PC-3 (cell line): ENCODE measurements at regions of chr11 and their contacts with region 1.

Region 1: GRCh38 chr11:102119997-102120396 is 9.8 kb downstream of the YAP1 start:
- DNase-seq: peak; percentile 78
- ATAC-seq: peak; percentile 19
- H3K4me3 ChIP-seq: peak overlapping the region; percentile 33
- H3K27ac ChIP-seq: peak overlapping the region; percentile 72
- H3K4me1 ChIP-seq: peaks cover 71% of the 10 kb centered on the region
- H3K27me3 ChIP-seq: no peaks in the 10 kb centered on the region
- CTCF ChIP-seq: no peak

Region 2: DNA sequence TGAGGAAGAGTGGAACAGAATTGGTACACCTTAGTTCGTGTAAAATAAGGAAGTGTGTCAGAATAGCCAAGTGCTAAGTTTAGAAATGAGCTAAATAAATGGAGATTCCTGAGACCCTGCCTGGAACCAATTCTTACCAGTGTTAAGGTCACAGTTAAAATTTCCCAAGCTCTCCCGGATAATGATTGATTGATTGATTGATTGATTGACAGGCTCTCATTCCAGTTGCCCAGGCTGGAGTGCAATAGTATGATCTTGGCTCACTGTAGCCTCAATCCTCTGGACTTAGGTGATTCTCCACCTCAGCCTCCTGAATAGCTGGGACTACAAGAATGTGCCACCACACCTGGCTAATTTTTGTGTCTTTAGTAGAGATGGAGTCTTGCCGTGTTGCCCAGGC is 10.2 kb after region 1 on chr11:
- CTCF ChIA-PET with region 1: no interaction called
- POLR2A ChIA-PET with region 1: interaction called, 5 read pairs
- intact Hi-C with region 1: loop called (anchors 1 kb)
- DNase-seq: no peak
- ATAC-seq: no peak
- H3K4me3 ChIP-seq: no peak overlapping the region
- H3K27ac ChIP-seq: no peak overlapping the region
- H3K4me1 ChIP-seq: peaks cover 9% of the 10 kb centered on the region; the same call in 1 of the 2 replicates
- H3K27me3 ChIP-seq: no peaks in the 10 kb centered on the region
- CTCF ChIP-seq: no peak

Region 3: DNA sequence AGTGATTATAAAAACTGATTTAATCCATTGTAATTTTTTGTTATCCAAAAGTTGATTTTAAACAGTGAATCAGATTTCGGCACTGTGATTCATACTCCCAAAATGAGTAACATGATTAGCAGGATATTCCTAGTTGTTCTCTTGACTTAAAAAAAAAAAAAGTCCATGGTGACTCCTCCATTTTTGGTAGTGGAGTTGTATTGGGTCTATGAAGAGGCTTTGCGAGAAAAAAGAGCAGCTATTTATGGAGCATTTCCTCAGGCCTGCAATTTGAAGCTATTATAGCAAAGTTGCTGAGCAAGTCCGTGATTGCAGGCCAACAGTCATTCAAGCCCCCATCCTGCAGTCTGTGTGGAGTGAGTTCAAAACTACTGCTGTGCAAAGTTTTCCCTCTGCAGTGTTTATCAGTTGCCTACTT is 19.1 kb after region 1 on chr11:
- CTCF ChIA-PET with region 1: no interaction called
- POLR2A ChIA-PET with region 1: interaction called, 11 read pairs
- intact Hi-C with region 1: loop called (anchors 2 kb)
- DNase-seq: peak; percentile 89
- ATAC-seq: peak; percentile 80
- H3K4me3 ChIP-seq: peak overlapping the region; percentile 48
- H3K27ac ChIP-seq: peak overlapping the region; percentile 85
- H3K4me1 ChIP-seq: peaks cover 25% of the 10 kb centered on the region
- H3K27me3 ChIP-seq: no peaks in the 10 kb centered on the region
- CTCF ChIP-seq: no peak

Region 4: GRCh38 chr11:102157219-102157618 is 37.2 kb after region 1 on chr11:
- CTCF ChIA-PET with region 1: no interaction called
- POLR2A ChIA-PET with region 1: no interaction called
- intact Hi-C with region 1: loop called (anchors 5 kb)
- DNase-seq: peak; percentile 83
- ATAC-seq: peak; percentile 85
- H3K4me3 ChIP-seq: no peak overlapping the region
- H3K27ac ChIP-seq: peak overlapping the region; percentile 7
- H3K4me1 ChIP-seq: peaks cover 33% of the 10 kb centered on the region
- H3K27me3 ChIP-seq: no peaks in the 10 kb centered on the region
- CTCF ChIP-seq: no peak

Region 5: DNA sequence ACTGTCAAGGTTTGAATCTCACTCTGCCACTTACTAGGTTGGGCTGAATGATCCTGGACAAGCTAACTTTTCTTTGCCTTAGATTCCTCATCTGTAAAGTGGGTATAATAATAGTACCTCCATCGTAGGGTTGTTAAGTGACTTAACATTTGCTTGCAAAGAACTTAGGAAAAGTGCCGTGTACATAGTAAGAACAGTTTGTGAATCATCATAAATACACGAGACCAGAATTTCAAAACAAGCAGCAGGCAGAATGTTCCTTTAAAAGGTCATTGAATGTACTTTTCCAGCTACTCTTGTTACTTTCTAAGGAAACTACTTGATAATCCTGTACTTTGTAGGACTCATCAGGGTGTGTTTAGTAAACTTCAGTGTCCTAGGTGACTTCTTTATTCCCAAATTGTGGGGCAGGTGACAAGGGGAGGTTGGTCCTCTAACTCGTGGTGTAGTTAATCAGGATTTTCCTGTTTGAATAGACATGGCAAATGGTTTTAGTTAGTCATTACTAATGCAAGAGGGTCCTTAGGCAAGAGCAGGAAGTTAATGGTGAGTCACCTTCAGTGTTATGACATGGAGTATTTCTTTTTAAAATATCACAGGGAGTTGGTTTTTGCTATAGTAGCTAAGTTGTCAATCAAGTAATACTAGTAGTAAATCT is 58.1 kb after region 1 on chr11:
- CTCF ChIA-PET with region 1: no interaction called
- POLR2A ChIA-PET with region 1: interaction called, 3 read pairs
- intact Hi-C with region 1: loop called (anchors 1 kb)
- DNase-seq: peak; percentile 99
- ATAC-seq: peak; percentile 90
- H3K4me3 ChIP-seq: peak overlapping the region; percentile 26; the same call in 1 of the 2 replicates
- H3K27ac ChIP-seq: peak overlapping the region; percentile 80
- H3K4me1 ChIP-seq: peaks cover 27% of the 10 kb centered on the region
- H3K27me3 ChIP-seq: no peaks in the 10 kb centered on the region
- CTCF ChIP-seq: no peak

Region 6: GRCh38 chr11:102225689-102226568 is 105.9 kb after region 1 on chr11:
- CTCF ChIA-PET with region 1: no interaction called
- POLR2A ChIA-PET with region 1: no interaction called
- intact Hi-C with region 1: loop called (anchors 1 kb)
- DNase-seq: peak; percentile 87
- ATAC-seq: peak; percentile 93
- H3K4me3 ChIP-seq: peak overlapping the region; percentile 51
- H3K27ac ChIP-seq: peak overlapping the region; percentile 64
- H3K4me1 ChIP-seq: peaks cover 47% of the 10 kb centered on the region
- H3K27me3 ChIP-seq: no peaks in the 10 kb centered on the region
- CTCF ChIP-seq: no peak